ENCODE measurements at regions of chr20 and their contacts with region 1.

Region 1: GRCh38 chr20:23937303-23938117 is 51.1 kb downstream of the GGTLC1 start:
- DNase-seq: peak; percentile 69 to 70
- H3K4me3 ChIP-seq: no peak overlapping the region
- H3K27ac ChIP-seq: no peak overlapping the region
- H3K4me1 ChIP-seq: no peaks in the 10 kb centered on the region
- H3K27me3 ChIP-seq: no peaks in the 10 kb centered on the region
- CTCF ChIP-seq: peak; percentile 60 to 93 (median 81)
- POLR2A ChIP-seq: no peak

Region 2: DNA sequence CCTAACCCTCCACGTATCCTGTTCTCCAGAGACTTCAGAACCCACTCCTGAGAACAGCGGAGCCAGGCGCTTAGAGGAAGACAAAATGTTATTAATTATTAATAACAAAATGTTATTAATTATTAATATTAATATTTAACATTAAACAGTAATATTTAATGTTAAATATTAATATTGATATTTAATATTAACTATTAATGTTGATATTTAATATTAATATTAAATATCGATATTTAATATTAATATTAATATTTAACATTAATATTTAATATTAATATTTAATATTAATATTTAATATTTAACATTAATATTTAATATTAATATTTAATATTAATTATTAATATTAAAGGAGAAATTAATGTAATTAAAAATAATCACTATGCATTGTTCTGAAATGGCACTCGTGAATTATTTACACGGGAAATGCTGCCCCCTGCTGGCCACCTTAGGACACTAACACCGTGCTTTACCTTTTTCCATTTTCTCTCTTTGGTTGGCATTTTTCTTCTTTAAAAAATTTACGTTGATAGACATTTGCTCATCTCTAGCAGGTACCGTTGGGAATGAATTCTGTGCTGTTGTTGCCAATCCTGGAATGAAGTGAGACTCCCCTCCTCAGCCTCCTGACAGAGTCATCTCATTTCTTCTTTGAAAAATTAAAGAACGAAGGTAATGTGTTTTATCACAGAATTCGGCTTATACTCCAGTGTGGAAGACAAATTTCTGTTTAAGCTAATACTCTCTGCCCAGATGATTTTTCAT is 58.6 kb after region 1 on chr20:
- intact Hi-C with region 1: loop called (anchors 2 kb)
- DNase-seq: peak; percentile 62 to 71
- H3K4me3 ChIP-seq: no peak overlapping the region
- H3K27ac ChIP-seq: no peak overlapping the region
- H3K4me1 ChIP-seq: no peaks in the 10 kb centered on the region
- H3K27me3 ChIP-seq: no peaks in the 10 kb centered on the region
- CTCF ChIP-seq: peak; percentile 62 to 80 (median 74)
- POLR2A ChIP-seq: no peak

Region 3: GRCh38 chr20:24100385-24101011 is 163.0 kb after region 1 on chr20:
- intact Hi-C with region 1: loop called (anchors 5 kb)
- DNase-seq: peak; percentile 72 to 77
- H3K4me3 ChIP-seq: no peak overlapping the region
- H3K27ac ChIP-seq: no peak overlapping the region
- H3K4me1 ChIP-seq: peaks cover 13 to 21% of the 10 kb centered on the region in 2 donors
- H3K27me3 ChIP-seq: no peaks in the 10 kb centered on the region
- CTCF ChIP-seq: peak; percentile 54 to 91 (median 82)
- POLR2A ChIP-seq: no peak